ENCODE measurements at regions of chr19 and their contacts with region 1.

Region 1: GRCh38 chr19:8158411-8159074 is 9.2 kb upstream of the FBN3 start:
- DNase-seq: peak; percentile 56
- ATAC-seq: peak; percentile 79
- H3K4me3 Mint-ChIP-seq: no peak overlapping the region
- H3K27ac Mint-ChIP-seq: no peak overlapping the region
- H3K4me1 Mint-ChIP-seq: peaks cover 8% of the 10 kb centered on the region
- H3K27me3 Mint-ChIP-seq: peaks cover 13% of the 10 kb centered on the region
- CTCF ChIP-seq: peak; percentile 73

Region 2: GRCh38 chr19:8095903-8096470 is 62.6 kb before region 1 on chr19:
- CTCF ChIA-PET with region 1: no interaction called
- POLR2A ChIA-PET with region 1: no interaction called
- intact Hi-C with region 1: no loop called
- DNase-seq: no peak
- ATAC-seq: no peak
- H3K4me3 Mint-ChIP-seq: no peak overlapping the region
- H3K27ac Mint-ChIP-seq: no peak overlapping the region
- H3K4me1 Mint-ChIP-seq: no peaks in the 10 kb centered on the region
- H3K27me3 Mint-ChIP-seq: peaks cover 2% of the 10 kb centered on the region
- CTCF ChIP-seq: peak; percentile 24

Region 3: GRCh38 chr19:8141726-8142512 is 16.6 kb before region 1 on chr19:
- CTCF ChIA-PET with region 1: no interaction called
- POLR2A ChIA-PET with region 1: no interaction called
- intact Hi-C with region 1: no loop called
- DNase-seq: no peak
- ATAC-seq: no peak
- H3K4me3 Mint-ChIP-seq: no peak overlapping the region
- H3K27ac Mint-ChIP-seq: no peak overlapping the region
- H3K4me1 Mint-ChIP-seq: no peaks in the 10 kb centered on the region
- H3K27me3 Mint-ChIP-seq: peaks cover 7% of the 10 kb centered on the region
- CTCF ChIP-seq: no peak

Region 4: GRCh38 chr19:8252922-8253589 is 94.5 kb after region 1 on chr19:
- CTCF ChIA-PET with region 1: interaction called, 26 read pairs
- POLR2A ChIA-PET with region 1: no interaction called
- intact Hi-C with region 1: loop called (anchors 2 kb)
- DNase-seq: peak; percentile 89
- ATAC-seq: peak; percentile 93
- H3K4me3 Mint-ChIP-seq: no peak overlapping the region
- H3K27ac Mint-ChIP-seq: no peak overlapping the region
- H3K4me1 Mint-ChIP-seq: peaks cover 10% of the 10 kb centered on the region
- H3K27me3 Mint-ChIP-seq: no peaks in the 10 kb centered on the region
- CTCF ChIP-seq: peak; percentile 96

Measured in activated CD8-positive, alpha-beta T cell treated with anti-CD3 and anti-CD28 coated beads for 36 hours (primary cell).